CD4-positive, alpha-beta T cell (primary cell): ENCODE measurements at regions of chr1 and their contacts with region 1.

Region 1: GRCh38 chr1:90721210-90722194 is 4.4 kb upstream of the BARHL2 start:
- DNase-seq: peak in 6 of 14 experiments; percentile 28 to 72 (median 51)
- ATAC-seq: peak; percentile 49
- H3K4me3 ChIP-seq: no peak overlapping the region
- H3K4me3 Mint-ChIP-seq: no peak overlapping the region
- H3K27ac ChIP-seq: no peak overlapping the region
- H3K27ac Mint-ChIP-seq: peak overlapping the region; percentile 35
- H3K4me1 ChIP-seq: peaks cover 61% of the 10 kb centered on the region
- H3K4me1 Mint-ChIP-seq: peaks cover 56% of the 10 kb centered on the region
- H3K27me3 ChIP-seq: peaks cover 90 to 95% of the 10 kb centered on the region in 2 experiments
- H3K27me3 Mint-ChIP-seq: peaks cover 93% of the 10 kb centered on the region
- CTCF ChIP-seq: peak; percentile 48

Region 2: DNA sequence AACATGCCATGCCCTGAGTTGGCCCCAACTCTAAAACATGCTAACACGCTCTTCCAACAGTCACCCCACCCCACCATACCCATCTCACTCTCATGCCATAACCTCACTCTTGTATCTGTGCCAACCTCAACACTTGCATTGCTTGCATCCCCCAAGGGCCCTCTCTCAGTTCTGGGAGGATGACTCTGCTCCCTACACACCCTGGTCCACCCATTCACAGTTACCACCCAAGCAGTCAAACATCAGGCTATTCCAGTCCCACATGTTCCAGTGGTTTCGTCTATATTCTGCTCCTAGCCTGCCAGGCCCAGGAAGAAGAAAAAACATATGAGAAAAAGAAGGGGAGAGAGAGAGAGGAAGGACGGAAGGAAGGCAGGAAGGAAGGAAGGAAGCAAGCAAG is 1326.7 kb before region 1 on chr1:
- CTCF ChIA-PET with region 1: no interaction called
- POLR2A ChIA-PET with region 1: no interaction called
- intact Hi-C with region 1: no loop called
- DNase-seq: no peak
- ATAC-seq: no peak
- H3K4me3 ChIP-seq: no peak overlapping the region
- H3K4me3 Mint-ChIP-seq: no peak overlapping the region
- H3K27ac ChIP-seq: no peak overlapping the region
- H3K27ac Mint-ChIP-seq: no peak overlapping the region
- H3K4me1 ChIP-seq: no peaks in the 10 kb centered on the region
- H3K4me1 Mint-ChIP-seq: no peaks in the 10 kb centered on the region
- H3K27me3 ChIP-seq: no peaks in the 10 kb centered on the region
- H3K27me3 Mint-ChIP-seq: no peaks in the 10 kb centered on the region
- CTCF ChIP-seq: no peak

Region 3: GRCh38 chr1:90012305-90012704 is 709.2 kb before region 1 on chr1:
- CTCF ChIA-PET with region 1: no interaction called
- POLR2A ChIA-PET with region 1: no interaction called
- intact Hi-C with region 1: no loop called
- DNase-seq: no peak
- ATAC-seq: no peak
- H3K4me3 ChIP-seq: no peak overlapping the region
- H3K4me3 Mint-ChIP-seq: no peak overlapping the region
- H3K27ac ChIP-seq: no peak overlapping the region
- H3K27ac Mint-ChIP-seq: no peak overlapping the region
- H3K4me1 ChIP-seq: no peaks in the 10 kb centered on the region
- H3K4me1 Mint-ChIP-seq: peaks cover 16% of the 10 kb centered on the region
- H3K27me3 ChIP-seq: no peaks in the 10 kb centered on the region
- H3K27me3 Mint-ChIP-seq: no peaks in the 10 kb centered on the region
- CTCF ChIP-seq: no peak

Region 4: GRCh38 chr1:90319918-90320317 is 401.6 kb before region 1 on chr1:
- CTCF ChIA-PET with region 1: no interaction called
- POLR2A ChIA-PET with region 1: no interaction called
- intact Hi-C with region 1: no loop called
- DNase-seq: no peak
- ATAC-seq: no peak
- H3K4me3 ChIP-seq: no peak overlapping the region
- H3K4me3 Mint-ChIP-seq: no peak overlapping the region
- H3K27ac ChIP-seq: no peak overlapping the region
- H3K27ac Mint-ChIP-seq: no peak overlapping the region
- H3K4me1 ChIP-seq: no peaks in the 10 kb centered on the region
- H3K4me1 Mint-ChIP-seq: no peaks in the 10 kb centered on the region
- H3K27me3 ChIP-seq: peaks cover 0 to 6% of the 10 kb centered on the region in 2 experiments
- H3K27me3 Mint-ChIP-seq: peaks cover 7% of the 10 kb centered on the region
- CTCF ChIP-seq: no peak

Region 5: GRCh38 chr1:90834886-90835660 is 113.6 kb after region 1 on chr1:
- CTCF ChIA-PET with region 1: no interaction called
- POLR2A ChIA-PET with region 1: no interaction called
- intact Hi-C with region 1: loop called (anchors 5 to 10 kb)
- DNase-seq: peak in 1 of 14 experiments; percentile 22
- ATAC-seq: peak; percentile 43
- H3K4me3 ChIP-seq: no peak overlapping the region
- H3K4me3 Mint-ChIP-seq: peak overlapping the region; percentile 1
- H3K27ac ChIP-seq: no peak overlapping the region
- H3K27ac Mint-ChIP-seq: no peak overlapping the region
- H3K4me1 ChIP-seq: peaks cover 27% of the 10 kb centered on the region
- H3K4me1 Mint-ChIP-seq: peaks cover 31% of the 10 kb centered on the region
- H3K27me3 ChIP-seq: peaks cover 85 to 94% of the 10 kb centered on the region in 2 experiments
- H3K27me3 Mint-ChIP-seq: peaks cover 92% of the 10 kb centered on the region
- CTCF ChIP-seq: no peak

Region 6: GRCh38 chr1:90964444-90965035 is 243.0 kb after region 1 on chr1:
- CTCF ChIA-PET with region 1: no interaction called
- POLR2A ChIA-PET with region 1: no interaction called
- intact Hi-C with region 1: loop called (anchors 2 to 10 kb)
- DNase-seq: peak in 3 of 14 experiments; percentile 20 to 30 (median 24)
- ATAC-seq: peak; percentile 37
- H3K4me3 ChIP-seq: no peak overlapping the region
- H3K4me3 Mint-ChIP-seq: no peak overlapping the region
- H3K27ac ChIP-seq: no peak overlapping the region
- H3K27ac Mint-ChIP-seq: no peak overlapping the region
- H3K4me1 ChIP-seq: no peaks in the 10 kb centered on the region
- H3K4me1 Mint-ChIP-seq: peaks cover 68% of the 10 kb centered on the region
- H3K27me3 ChIP-seq: no peaks in the 10 kb centered on the region
- H3K27me3 Mint-ChIP-seq: no peaks in the 10 kb centered on the region
- CTCF ChIP-seq: peak; percentile 66